CD8-positive, alpha-beta memory T cell (primary cell): ENCODE measurements at regions of chr3 and their contacts with region 1.

Region 1: DNA sequence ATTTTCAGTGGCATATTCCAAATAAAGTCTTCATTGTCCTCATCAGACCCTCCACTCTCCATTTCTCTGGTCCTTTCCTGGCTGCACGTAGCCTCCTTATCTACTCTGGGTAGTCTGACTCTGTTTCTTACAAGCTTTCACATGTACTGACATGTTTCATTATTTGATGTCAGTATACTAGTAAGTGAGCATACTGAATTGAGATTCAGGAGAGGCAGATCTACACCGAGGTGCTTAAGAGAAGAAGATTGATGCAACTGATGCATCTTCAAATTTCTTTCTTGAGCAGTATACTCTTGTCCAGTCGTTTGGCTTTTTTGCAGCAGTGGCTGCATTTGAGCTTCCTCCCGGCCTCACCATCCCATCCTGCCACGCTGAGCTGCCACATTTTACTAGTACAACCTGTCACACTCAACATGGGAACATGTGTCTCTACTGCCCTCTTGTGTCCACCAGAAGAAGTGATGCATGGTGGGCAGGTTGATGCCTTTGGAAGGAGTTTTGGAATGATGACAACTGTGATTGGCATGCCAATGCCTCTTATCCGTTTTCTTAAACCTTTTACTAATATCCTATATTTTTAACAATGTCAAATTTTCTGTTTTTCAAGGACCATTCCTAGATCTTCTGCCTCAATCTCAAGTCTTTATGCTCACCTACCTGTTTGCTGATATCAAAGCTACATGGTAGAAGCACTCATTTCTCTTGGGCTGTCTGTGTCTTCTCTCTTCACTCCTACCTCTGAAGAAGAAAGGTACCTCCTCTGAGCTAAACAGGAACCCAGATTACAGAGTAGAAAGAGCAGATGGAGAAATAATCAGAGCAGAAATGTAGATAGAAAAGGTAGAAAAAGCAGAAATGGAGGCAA is 38.7 kb downstream of the GUCA1C start:
- DNase-seq: peak; percentile 28 to 75 (median 62)
- H3K4me3 ChIP-seq: no peak overlapping the region
- H3K4me3 Mint-ChIP-seq: peak overlapping the region in 6 of 7 donors; percentile 2 to 60 (median 53)
- H3K27ac ChIP-seq: no peak overlapping the region
- H3K27ac Mint-ChIP-seq: peak overlapping the region in 1 of 8 donors; percentile 13
- H3K4me1 ChIP-seq: peaks cover 6% of the 10 kb centered on the region
- H3K4me1 Mint-ChIP-seq: peaks cover 14 to 21% (median 18%) of the 10 kb centered on the region in 3 donors
- H3K27me3 ChIP-seq: no peaks in the 10 kb centered on the region
- H3K27me3 Mint-ChIP-seq: peaks cover 2 to 8% of the 10 kb centered on the region in 2 donors

Region 2: GRCh38 chr3:108489771-108490170 is 425.2 kb before region 1 on chr3:
- CTCF ChIA-PET with region 1: interaction called, 19 read pairs
- POLR2A ChIA-PET with region 1: no interaction called
- DNase-seq: peak; percentile 6 to 55 (median 48)
- H3K4me3 ChIP-seq: no peak overlapping the region
- H3K4me3 Mint-ChIP-seq: no peak overlapping the region
- H3K27ac ChIP-seq: no peak overlapping the region
- H3K27ac Mint-ChIP-seq: peak overlapping the region in 1 of 8 donors; percentile 2
- H3K4me1 ChIP-seq: no peaks in the 10 kb centered on the region
- H3K4me1 Mint-ChIP-seq: peaks cover 4 to 5% (median 5%) of the 10 kb centered on the region in 3 donors
- H3K27me3 ChIP-seq: no peaks in the 10 kb centered on the region
- H3K27me3 Mint-ChIP-seq: no peaks in the 10 kb centered on the region

Region 3: DNA sequence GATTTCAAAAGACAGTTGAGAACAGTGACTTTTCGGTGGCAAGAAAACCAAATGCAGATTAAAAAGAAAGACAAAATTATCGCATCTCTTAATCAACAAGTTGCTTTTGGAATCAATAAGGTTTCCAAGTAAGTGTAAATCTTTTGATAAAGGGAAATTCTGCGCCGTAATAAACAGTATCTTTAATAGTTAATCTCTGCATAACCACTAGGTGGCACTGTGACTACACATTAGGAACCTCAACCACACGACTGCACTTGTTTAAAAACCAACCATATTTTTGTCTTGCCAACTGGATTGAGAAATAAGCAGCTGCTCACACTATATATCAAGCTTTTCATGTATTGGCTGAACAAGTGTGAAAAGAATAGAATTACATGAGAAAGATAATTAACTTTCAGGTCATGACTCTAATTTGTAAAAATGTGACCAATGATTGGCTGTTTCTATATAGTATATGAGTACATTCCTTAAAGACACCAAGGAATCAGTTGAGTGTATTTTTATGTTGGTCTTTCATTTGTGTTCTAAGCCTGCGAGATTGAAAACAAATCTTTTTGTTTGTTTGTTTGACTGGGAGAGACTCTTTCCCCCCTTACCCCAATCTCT is 252.8 kb before region 1 on chr3:
- CTCF ChIA-PET with region 1: interaction called, 65 read pairs
- POLR2A ChIA-PET with region 1: no interaction called
- DNase-seq: peak in 4 of 5 donors; percentile 27 to 63 (median 60)
- H3K4me3 ChIP-seq: no peak overlapping the region
- H3K4me3 Mint-ChIP-seq: peak overlapping the region in 1 of 7 donors; percentile 27
- H3K27ac ChIP-seq: no peak overlapping the region
- H3K27ac Mint-ChIP-seq: peak overlapping the region in 2 of 8 donors; percentile 35
- H3K4me1 ChIP-seq: no peaks in the 10 kb centered on the region
- H3K4me1 Mint-ChIP-seq: peaks cover 10 to 20% (median 13%) of the 10 kb centered on the region in 3 donors
- H3K27me3 ChIP-seq: no peaks in the 10 kb centered on the region
- H3K27me3 Mint-ChIP-seq: no peaks in the 10 kb centered on the region

Region 4: DNA sequence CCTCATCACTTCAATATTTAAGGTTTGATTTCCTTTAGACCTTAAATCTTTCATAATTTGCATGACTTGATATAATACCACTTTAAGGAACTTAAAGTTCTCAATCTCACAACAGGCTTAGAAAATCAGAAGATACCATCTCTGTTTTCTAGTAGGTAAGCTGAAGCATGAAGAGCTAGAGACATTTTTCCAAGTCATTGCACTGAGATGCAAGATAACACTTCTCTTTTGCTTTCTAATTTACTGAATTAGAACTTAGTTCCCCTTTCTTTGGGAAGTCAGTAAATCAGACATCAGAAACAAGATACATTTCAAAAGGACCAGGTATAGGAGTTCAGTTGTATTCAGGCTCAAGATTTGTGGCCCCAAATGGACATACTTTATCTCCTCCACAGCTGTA is 245.8 kb before region 1 on chr3:
- CTCF ChIA-PET with region 1: interaction called, 65 read pairs
- POLR2A ChIA-PET with region 1: no interaction called
- DNase-seq: no peak
- H3K4me3 ChIP-seq: no peak overlapping the region
- H3K4me3 Mint-ChIP-seq: no peak overlapping the region
- H3K27ac ChIP-seq: no peak overlapping the region
- H3K27ac Mint-ChIP-seq: no peak overlapping the region
- H3K4me1 ChIP-seq: no peaks in the 10 kb centered on the region
- H3K4me1 Mint-ChIP-seq: peaks cover 2 to 14% (median 5%) of the 10 kb centered on the region in 3 donors
- H3K27me3 ChIP-seq: no peaks in the 10 kb centered on the region
- H3K27me3 Mint-ChIP-seq: no peaks in the 10 kb centered on the region

Region 5: GRCh38 chr3:109098079-109098644 is 183.2 kb after region 1 on chr3:
- CTCF ChIA-PET with region 1: no interaction called
- POLR2A ChIA-PET with region 1: no interaction called
- DNase-seq: no peak
- H3K4me3 ChIP-seq: no peak overlapping the region
- H3K4me3 Mint-ChIP-seq: no peak overlapping the region
- H3K27ac ChIP-seq: no peak overlapping the region
- H3K27ac Mint-ChIP-seq: no peak overlapping the region
- H3K4me1 ChIP-seq: no peaks in the 10 kb centered on the region
- H3K4me1 Mint-ChIP-seq: no peaks in the 10 kb centered on the region
- H3K27me3 ChIP-seq: no peaks in the 10 kb centered on the region
- H3K27me3 Mint-ChIP-seq: peaks cover 3 to 5% of the 10 kb centered on the region in 2 donors